GM10248 (cell line): ENCODE measurements at regions of chr15 and their contacts with region 1.

Region 1: DNA sequence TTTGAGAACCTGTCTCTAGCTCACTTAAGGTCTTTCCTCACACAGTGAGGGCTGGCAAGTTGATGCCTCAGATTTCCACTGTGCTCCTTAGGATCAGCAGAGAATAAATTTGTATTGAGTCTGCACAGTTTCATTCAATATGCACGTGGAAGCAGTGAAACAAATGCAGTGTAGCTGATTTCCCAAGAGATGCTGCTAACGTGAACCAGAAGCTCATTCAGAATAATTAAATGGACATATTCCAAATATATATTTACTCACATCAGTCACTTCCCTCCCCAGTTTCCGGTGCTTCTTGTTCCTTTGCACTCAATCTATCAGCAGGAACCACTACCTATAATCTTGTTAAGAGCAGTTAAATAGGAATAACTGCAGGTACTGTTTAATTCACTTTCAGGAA is 86.1 kb downstream of the UNC13C start:
- DNase-seq: no peak
- CTCF ChIP-seq: no peak

Region 2: GRCh38 chr15:54011634-54012033 is 52.7 kb before region 1 on chr15:
- CTCF ChIA-PET with region 1: no interaction called
- POLR2A ChIA-PET with region 1: no interaction called
- DNase-seq: no peak
- CTCF ChIP-seq: no peak

Region 3: DNA sequence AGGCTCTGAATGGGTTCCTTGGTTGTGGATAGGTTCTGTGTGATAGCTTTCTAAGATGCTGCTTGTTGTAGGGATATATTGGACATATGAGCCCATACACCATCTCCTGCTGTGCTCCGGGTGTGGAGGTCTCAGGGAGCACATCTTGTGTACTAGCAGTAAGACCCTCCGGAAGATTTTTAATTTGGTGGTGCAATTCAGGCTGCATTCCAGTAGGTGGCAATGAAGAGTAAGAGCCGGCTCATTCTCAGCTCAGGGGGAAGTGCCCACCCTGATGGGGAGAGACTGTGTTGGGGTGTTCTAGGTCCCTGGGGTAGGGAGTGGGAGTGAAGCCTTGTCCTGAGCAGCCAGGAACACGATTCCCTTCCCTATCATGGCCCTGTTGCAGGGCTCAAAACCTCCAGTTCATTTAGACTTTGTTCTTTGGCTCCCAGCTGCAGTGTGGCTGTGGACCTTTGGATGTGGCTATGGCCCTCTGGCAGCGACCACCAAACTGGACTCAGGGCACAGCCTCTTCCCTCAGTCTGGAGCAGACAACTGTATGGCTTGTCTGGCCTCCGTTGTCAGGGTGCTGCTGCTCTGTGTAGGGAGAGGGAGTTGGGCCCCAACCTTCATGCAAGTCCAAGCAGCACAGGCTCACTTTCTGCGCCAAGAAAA is 18.6 kb after region 1 on chr15:
- CTCF ChIA-PET with region 1: interaction called, 16 read pairs
- POLR2A ChIA-PET with region 1: no interaction called
- DNase-seq: no peak
- CTCF ChIP-seq: peak; percentile 67

Region 4: DNA sequence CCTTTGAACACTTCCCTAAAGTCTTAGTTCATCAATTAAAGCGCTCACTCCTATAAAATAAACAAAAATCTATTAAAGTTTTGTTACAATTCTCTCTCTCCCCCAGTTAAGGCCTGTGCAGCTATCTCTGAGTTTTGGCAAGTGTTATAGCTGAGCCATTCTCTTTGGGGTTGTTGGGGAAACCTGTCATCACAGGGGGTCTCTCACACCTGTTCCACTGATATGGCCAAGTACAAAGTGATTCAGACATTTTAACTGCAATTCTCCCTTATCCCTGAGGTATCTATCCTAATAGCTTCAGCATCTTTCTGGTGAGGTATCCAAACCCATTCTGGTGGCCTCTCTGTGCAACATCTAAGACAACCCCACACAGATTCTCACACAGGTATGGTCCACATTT is 30.3 kb after region 1 on chr15:
- CTCF ChIA-PET with region 1: no interaction called
- POLR2A ChIA-PET with region 1: no interaction called
- DNase-seq: no peak
- CTCF ChIP-seq: no peak

Region 5: GRCh38 chr15:54197995-54198394 is 133.6 kb after region 1 on chr15:
- CTCF ChIA-PET with region 1: no interaction called
- POLR2A ChIA-PET with region 1: no interaction called
- DNase-seq: no peak
- CTCF ChIP-seq: no peak